MCF 10A (cell line): ENCODE measurements at regions of chr1 and their contacts with region 1.

Region 1: GRCh38 chr1:34500451-34500850 is 254.4 kb upstream of the GJB5 start:
- DNase-seq: peak; percentile 16
- H3K4me3 Mint-ChIP-seq: no peak overlapping the region
- H3K27ac Mint-ChIP-seq: no peak overlapping the region
- H3K4me1 Mint-ChIP-seq: no peaks in the 10 kb centered on the region
- H3K27me3 Mint-ChIP-seq: no peaks in the 10 kb centered on the region
- CTCF ChIP-seq: no peak

Region 2: GRCh38 chr1:34433099-34433498 is 67.4 kb before region 1 on chr1:
- CTCF ChIA-PET with region 1: no interaction called
- POLR2A ChIA-PET with region 1: no interaction called
- intact Hi-C with region 1: loop called (anchors 10 kb)
- DNase-seq: no peak
- H3K4me3 Mint-ChIP-seq: no peak overlapping the region
- H3K27ac Mint-ChIP-seq: no peak overlapping the region
- H3K4me1 Mint-ChIP-seq: no peaks in the 10 kb centered on the region
- H3K27me3 Mint-ChIP-seq: no peaks in the 10 kb centered on the region
- CTCF ChIP-seq: no peak

Region 3: DNA sequence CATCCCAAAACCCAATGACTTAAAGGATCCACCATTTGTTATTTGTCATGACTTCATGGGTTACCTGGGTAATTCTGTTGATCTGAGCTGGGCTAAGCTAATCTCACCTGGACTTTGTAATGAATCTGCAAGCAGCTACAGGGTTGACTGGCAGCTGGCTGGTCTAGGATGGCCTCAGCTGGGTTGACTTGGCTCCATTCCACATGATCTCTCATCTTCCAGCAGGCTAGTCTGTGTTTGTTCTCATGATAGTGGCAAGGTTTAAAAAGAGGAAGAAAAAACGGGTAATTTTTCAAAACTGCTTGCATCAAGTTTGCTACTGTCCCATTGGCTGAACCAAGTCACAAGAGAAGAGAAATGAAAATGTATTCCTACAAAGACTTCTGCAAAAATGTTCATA is 743.2 kb after region 1 on chr1:
- CTCF ChIA-PET with region 1: no interaction called
- POLR2A ChIA-PET with region 1: no interaction called
- intact Hi-C with region 1: no loop called
- DNase-seq: peak; percentile 5
- H3K4me3 Mint-ChIP-seq: no peak overlapping the region
- H3K27ac Mint-ChIP-seq: no peak overlapping the region
- H3K4me1 Mint-ChIP-seq: no peaks in the 10 kb centered on the region
- H3K27me3 Mint-ChIP-seq: no peaks in the 10 kb centered on the region
- CTCF ChIP-seq: no peak